B cell (primary cell): ENCODE measurements at regions of chr6 and their contacts with region 1.

Region 1: DNA sequence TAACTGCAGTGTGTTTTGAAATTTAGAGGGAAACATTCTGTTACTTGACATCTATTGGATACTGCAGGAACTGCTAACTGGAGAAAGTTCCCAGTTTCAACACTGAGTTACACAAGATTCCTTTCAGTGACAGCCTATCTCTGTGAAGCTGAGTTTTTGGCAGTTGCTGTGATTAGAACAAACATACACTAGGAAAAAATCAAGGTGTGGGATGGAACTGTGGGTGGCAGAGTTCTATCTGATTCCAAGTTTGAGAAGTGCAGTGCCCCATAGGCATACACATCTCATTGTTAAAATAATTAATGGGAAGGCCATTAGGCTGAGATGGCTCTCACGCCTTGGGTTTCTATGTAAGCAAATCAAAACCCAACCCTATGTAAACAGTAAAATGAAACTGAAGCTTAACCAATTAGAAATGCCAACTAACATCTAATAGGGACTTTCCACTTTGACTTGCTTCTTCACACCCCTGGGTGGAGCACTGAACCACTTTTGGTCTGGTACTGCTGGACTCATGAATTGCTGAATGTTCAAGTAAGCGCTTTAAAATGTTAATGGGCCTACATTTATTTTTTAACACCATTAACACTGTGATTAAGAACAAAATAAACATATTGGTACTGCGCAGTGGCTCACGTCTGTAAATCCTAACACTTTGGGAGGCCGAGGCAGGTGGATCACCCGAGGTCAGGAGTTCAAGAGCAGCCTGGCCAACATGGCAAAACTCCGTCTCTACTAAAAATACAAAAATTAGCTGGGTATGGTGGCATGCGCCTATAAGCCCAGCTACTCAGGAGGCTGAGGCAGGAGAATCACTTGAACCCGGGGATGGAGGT is 55.2 kb upstream of the TBC1D7 start:
- DNase-seq: peak; percentile 83
- ATAC-seq: peak; percentile 96
- H3K4me3 ChIP-seq: no peak overlapping the region
- H3K4me3 Mint-ChIP-seq: peak overlapping the region; percentile 55
- H3K27ac ChIP-seq: peak overlapping the region; percentile 70 to 84
- H3K27ac Mint-ChIP-seq: peak overlapping the region; percentile 92
- H3K4me1 ChIP-seq: peaks cover 36 to 42% of the 10 kb centered on the region in 2 donors
- H3K4me1 Mint-ChIP-seq: peaks cover 73% of the 10 kb centered on the region
- H3K27me3 ChIP-seq: no peaks in the 10 kb centered on the region
- H3K27me3 Mint-ChIP-seq: no peaks in the 10 kb centered on the region
- CTCF ChIP-seq: peak; percentile 53

Region 2: DNA sequence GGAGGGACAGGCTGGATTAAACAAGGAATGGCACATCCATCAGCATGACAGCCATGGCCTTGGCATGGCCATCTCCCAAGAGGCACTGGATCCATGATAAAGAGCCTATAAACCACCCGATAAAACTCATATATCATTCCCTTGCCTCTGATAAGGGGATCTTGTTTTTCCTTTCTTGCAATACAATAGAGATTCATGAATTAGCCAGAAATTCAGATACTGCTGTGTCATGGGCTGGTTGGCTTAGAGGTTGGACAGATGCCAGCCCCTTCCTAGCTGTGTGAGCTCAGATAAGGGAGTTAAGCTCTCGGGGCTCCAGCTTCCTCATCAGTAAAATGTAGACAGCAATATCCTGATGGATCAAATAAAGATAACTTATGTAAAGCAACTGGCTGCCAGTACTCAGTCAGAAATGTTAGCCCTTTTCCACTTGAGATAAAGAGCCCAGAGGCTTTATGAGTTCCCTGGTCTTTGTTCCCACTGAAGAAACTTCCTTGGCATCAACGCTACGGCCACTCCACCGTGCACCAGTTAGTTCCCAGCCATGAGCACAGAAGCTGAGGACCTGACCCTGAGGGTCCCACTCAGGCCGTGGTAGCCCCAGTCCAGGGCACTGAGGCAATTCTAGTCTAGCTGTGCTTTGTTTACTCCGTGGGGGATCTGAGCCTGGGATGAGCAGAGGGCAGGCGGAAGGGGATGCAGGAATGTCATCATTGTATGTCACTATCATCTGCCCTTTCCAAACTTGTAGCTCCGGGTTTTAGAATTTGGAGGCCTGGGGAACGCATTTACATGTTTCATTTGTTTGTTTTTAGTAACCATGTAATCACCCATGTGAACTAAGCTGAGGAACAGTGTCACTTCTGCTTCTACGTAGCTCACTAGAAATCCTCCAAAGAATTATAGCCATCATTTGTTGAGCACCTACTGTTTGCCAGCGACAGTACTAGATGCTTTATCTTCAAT is 12.0 kb after region 1 on chr6:
- CTCF ChIA-PET with region 1: interaction called, 17 read pairs
- POLR2A ChIA-PET with region 1: interaction called, 7 read pairs
- intact Hi-C with region 1: loop called (anchors 2 kb)
- DNase-seq: peak; percentile 73
- ATAC-seq: peak; percentile 59
- H3K4me3 ChIP-seq: peak overlapping the region in 1 of 5 experiments; percentile 2
- H3K4me3 Mint-ChIP-seq: peak overlapping the region; percentile 47
- H3K27ac ChIP-seq: peak overlapping the region; percentile 79 to 83
- H3K27ac Mint-ChIP-seq: peak overlapping the region; percentile 91
- H3K4me1 ChIP-seq: peaks cover 36 to 52% of the 10 kb centered on the region in 2 donors
- H3K4me1 Mint-ChIP-seq: peaks cover 52% of the 10 kb centered on the region
- H3K27me3 ChIP-seq: no peaks in the 10 kb centered on the region
- H3K27me3 Mint-ChIP-seq: no peaks in the 10 kb centered on the region
- CTCF ChIP-seq: no peak

Region 3: GRCh38 chr6:13427801-13428582 is 44.4 kb after region 1 on chr6:
- CTCF ChIA-PET with region 1: interaction called, 11 read pairs
- POLR2A ChIA-PET with region 1: interaction called, 4 read pairs
- intact Hi-C with region 1: loop called (anchors 2 kb)
- DNase-seq: peak; percentile 91
- ATAC-seq: peak; percentile 85
- H3K4me3 ChIP-seq: peak overlapping the region in 4 of 5 experiments; percentile 7 to 46 (median 26)
- H3K4me3 Mint-ChIP-seq: peak overlapping the region; percentile 82
- H3K27ac ChIP-seq: peak overlapping the region; percentile 83 to 86
- H3K27ac Mint-ChIP-seq: peak overlapping the region; percentile 95
- H3K4me1 ChIP-seq: peaks cover 41 to 75% of the 10 kb centered on the region in 2 donors
- H3K4me1 Mint-ChIP-seq: peaks cover 67% of the 10 kb centered on the region
- H3K27me3 ChIP-seq: no peaks in the 10 kb centered on the region
- H3K27me3 Mint-ChIP-seq: no peaks in the 10 kb centered on the region
- CTCF ChIP-seq: peak; percentile 66

Region 4: DNA sequence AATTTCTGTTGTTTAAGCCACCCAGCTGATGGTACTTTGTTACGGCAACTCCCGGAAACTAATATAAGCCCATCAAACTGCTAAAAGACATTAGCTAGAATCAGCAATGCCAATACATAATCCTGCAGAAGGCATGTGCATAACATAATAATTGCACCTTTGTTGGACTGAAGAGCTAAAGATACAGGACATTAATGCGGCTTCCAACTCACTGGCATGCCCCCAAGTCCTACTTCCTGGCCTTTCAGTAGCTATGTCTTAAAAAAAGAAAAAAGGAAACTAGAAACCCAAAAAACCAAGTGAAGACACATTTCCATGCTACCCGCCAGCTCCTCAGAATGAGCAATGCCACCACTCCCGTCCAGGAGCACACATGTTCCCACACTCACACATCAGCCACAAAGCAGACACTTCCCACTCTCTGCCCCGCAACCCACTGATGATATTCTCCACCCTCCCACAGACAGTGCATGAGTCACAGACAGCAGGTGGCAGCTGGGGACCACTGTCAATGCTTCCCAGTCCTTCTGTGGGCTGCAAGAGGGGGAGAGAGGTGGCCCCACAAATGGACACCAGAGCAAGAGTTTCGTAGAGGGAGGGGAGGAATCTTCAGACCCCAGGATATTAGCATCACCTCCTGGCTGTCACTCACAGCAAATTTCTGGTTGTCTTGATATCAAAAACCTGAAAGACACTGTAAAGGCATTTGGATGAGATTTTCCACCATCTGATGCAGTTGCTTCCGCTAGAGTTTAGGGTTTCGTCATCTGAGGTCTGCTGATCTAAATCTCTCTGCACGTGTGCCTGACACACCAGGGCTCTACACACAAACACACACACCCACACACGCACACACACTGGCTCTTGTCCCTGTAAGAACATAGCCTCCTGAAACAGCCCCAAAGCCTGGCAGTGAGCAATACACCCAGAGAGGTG is 71.0 kb after region 1 on chr6:
- CTCF ChIA-PET with region 1: interaction called, 11 read pairs
- POLR2A ChIA-PET with region 1: interaction called, 3 read pairs
- intact Hi-C with region 1: no loop called
- DNase-seq: peak; percentile 75
- ATAC-seq: peak; percentile 77
- H3K4me3 ChIP-seq: peak overlapping the region in 3 of 5 experiments; percentile 7 to 26 (median 12)
- H3K4me3 Mint-ChIP-seq: peak overlapping the region; percentile 76
- H3K27ac ChIP-seq: peak overlapping the region; percentile 23 to 50
- H3K27ac Mint-ChIP-seq: peak overlapping the region; percentile 88
- H3K4me1 ChIP-seq: peaks cover 36 to 41% of the 10 kb centered on the region in 2 donors
- H3K4me1 Mint-ChIP-seq: peaks cover 56% of the 10 kb centered on the region
- H3K27me3 ChIP-seq: no peaks in the 10 kb centered on the region
- H3K27me3 Mint-ChIP-seq: no peaks in the 10 kb centered on the region
- CTCF ChIP-seq: peak; percentile 17

Region 5: DNA sequence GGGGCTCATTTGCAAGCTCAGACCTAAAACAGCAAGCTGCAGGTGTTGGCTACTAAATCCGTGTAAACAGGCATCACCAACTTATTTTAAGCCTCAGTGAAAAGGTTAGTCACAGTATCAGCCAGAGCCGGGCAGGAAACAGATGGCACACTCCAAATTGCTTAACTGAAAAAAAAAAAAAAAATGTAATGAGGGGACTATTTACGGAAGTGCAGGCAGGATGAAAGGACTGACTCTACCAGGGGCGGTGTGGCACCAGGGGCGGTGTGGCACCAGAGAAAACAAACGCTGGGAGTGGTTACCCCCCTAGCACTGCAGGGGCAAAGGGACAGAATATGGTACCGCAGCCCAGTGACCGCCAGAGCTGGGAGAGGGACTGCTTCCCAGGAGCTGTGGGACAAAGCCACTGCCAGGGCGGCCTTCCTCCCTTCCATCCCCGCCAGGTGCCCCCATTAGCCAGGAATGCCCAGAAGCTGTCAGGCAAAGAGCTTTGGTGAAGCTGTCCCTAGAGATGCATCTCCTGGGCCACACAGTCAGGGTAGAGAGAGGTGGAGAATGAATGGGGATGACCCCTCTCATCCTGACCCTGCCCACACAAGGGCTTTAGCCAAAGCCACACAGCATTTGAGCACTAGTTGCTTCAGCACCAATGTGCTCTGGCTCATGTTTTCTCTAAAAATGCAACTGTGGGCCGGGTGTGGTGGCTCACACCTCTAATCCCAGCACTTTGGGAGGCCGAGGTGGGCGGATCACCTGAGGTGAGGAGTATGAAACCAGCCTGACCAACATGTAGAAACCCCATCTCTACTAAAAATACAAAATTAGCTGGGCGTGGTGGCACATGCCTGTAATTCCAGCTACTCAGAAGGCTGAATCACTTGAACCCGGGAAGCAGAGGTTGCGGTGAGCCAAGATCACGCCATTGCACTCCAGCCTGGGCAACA is 143.5 kb after region 1 on chr6:
- CTCF ChIA-PET with region 1: interaction called, 7 read pairs
- POLR2A ChIA-PET with region 1: no interaction called
- intact Hi-C with region 1: loop called (anchors 1 kb)
- DNase-seq: peak; percentile 86
- ATAC-seq: peak; percentile 88
- H3K4me3 ChIP-seq: peak overlapping the region in 3 of 5 experiments; percentile 0 to 33 (median 11)
- H3K4me3 Mint-ChIP-seq: peak overlapping the region; percentile 40
- H3K27ac ChIP-seq: peak overlapping the region; percentile 76 to 89
- H3K27ac Mint-ChIP-seq: peak overlapping the region; percentile 88
- H3K4me1 ChIP-seq: peaks cover 38 to 41% of the 10 kb centered on the region in 2 donors
- H3K4me1 Mint-ChIP-seq: peaks cover 47% of the 10 kb centered on the region
- H3K27me3 ChIP-seq: no peaks in the 10 kb centered on the region
- H3K27me3 Mint-ChIP-seq: no peaks in the 10 kb centered on the region
- CTCF ChIP-seq: peak; percentile 33

Region 6: GRCh38 chr6:13538084-13538483 is 154.5 kb after region 1 on chr6:
- CTCF ChIA-PET with region 1: interaction called, 36 read pairs
- POLR2A ChIA-PET with region 1: no interaction called
- intact Hi-C with region 1: loop called (anchors 1 kb)
- DNase-seq: peak; percentile 64
- ATAC-seq: peak; percentile 56
- H3K4me3 ChIP-seq: no peak overlapping the region
- H3K4me3 Mint-ChIP-seq: no peak overlapping the region
- H3K27ac ChIP-seq: no peak overlapping the region
- H3K27ac Mint-ChIP-seq: no peak overlapping the region
- H3K4me1 ChIP-seq: peaks cover 6 to 8% of the 10 kb centered on the region in 2 donors
- H3K4me1 Mint-ChIP-seq: peaks cover 17% of the 10 kb centered on the region
- H3K27me3 ChIP-seq: no peaks in the 10 kb centered on the region
- H3K27me3 Mint-ChIP-seq: no peaks in the 10 kb centered on the region
- CTCF ChIP-seq: peak; percentile 54

Region 7: GRCh38 chr6:13614926-13615798 is 231.6 kb after region 1 on chr6 and contains the start of gene NOL7:
- CTCF ChIA-PET with region 1: interaction called, 12 read pairs
- POLR2A ChIA-PET with region 1: interaction called, 4 read pairs
- intact Hi-C with region 1: loop called (anchors 1 kb)
- DNase-seq: peak; percentile 99
- ATAC-seq: peak; percentile 93
- H3K4me3 ChIP-seq: peak within 1 kb of the TSS; percentile 79 to 94 (median 93)
- H3K4me3 Mint-ChIP-seq: peak within 1 kb of the TSS; percentile 97
- H3K27ac ChIP-seq: peak within 1 kb of the TSS; percentile 73 to 82
- H3K27ac Mint-ChIP-seq: peak within 1 kb of the TSS; percentile 97
- H3K4me1 ChIP-seq: peaks cover 16 to 22% of the 10 kb centered on the region in 2 donors
- H3K4me1 Mint-ChIP-seq: peaks cover 46% of the 10 kb centered on the region
- H3K27me3 ChIP-seq: no peaks in the 10 kb centered on the region
- H3K27me3 Mint-ChIP-seq: no peaks in the 10 kb centered on the region
- CTCF ChIP-seq: peak; percentile 86
- total RNA-seq, gene NOL7: 48.6 and 58.3 TPM in 2 replicates

Region 8: GRCh38 chr6:13725570-13725969 is 342.0 kb after region 1 on chr6:
- CTCF ChIA-PET with region 1: no interaction called
- POLR2A ChIA-PET with region 1: no interaction called
- intact Hi-C with region 1: no loop called
- DNase-seq: no peak
- ATAC-seq: no peak
- H3K4me3 ChIP-seq: no peak overlapping the region
- H3K4me3 Mint-ChIP-seq: no peak overlapping the region
- H3K27ac ChIP-seq: no peak overlapping the region
- H3K27ac Mint-ChIP-seq: no peak overlapping the region
- H3K4me1 ChIP-seq: peaks cover 4 to 5% of the 10 kb centered on the region in 2 donors
- H3K4me1 Mint-ChIP-seq: peaks cover 3% of the 10 kb centered on the region
- H3K27me3 ChIP-seq: no peaks in the 10 kb centered on the region
- H3K27me3 Mint-ChIP-seq: no peaks in the 10 kb centered on the region
- CTCF ChIP-seq: no peak